ENCODE measurements at regions of chr6 and their contacts with region 1.

Region 1: GRCh38 chr6:157756708-157757429 is 66.2 kb upstream of the SNX9 start:
- DNase-seq: peak; percentile 82 to 93
- H3K4me3 ChIP-seq: no peak overlapping the region
- H3K27ac ChIP-seq: no peak overlapping the region
- H3K4me1 ChIP-seq: peaks cover 0 to 7% (median 5%) of the 10 kb centered on the region in 4 experiments; a peak in 4 of 7 replicates
- H3K27me3 ChIP-seq: no peaks in the 10 kb centered on the region
- CTCF ChIP-seq: peak; percentile 83 to 99 (median 91)
- EP300 ChIP-seq: no peak
- POLR2A ChIP-seq: no peak
- RAD21 ChIP-seq: peak; percentile 89

Region 2: DNA sequence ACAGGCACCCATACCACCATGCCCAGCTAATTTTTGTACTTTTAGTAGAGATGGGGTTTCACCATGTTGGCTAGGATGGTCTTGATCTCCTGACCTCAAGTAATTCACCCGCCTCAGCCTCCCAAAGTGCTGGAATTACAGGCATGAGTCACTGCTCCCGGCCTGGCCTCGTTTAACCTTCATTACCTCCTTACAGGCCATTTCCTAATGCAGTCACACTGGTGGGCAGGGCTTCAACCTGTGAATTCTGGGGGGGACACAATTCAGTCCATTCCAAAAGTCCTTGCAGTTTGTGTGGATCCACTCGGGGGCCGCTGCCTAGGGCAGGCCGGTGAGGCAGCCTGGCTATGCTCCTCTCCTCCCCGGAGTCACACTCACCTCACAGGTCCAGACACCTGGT is 46.3 kb before region 1 on chr6:
- CTCF ChIA-PET with region 1: interaction called, 15 read pairs
- POLR2A ChIA-PET with region 1: no interaction called
- DNase-seq: no peak
- H3K4me3 ChIP-seq: no peak overlapping the region
- H3K27ac ChIP-seq: no peak overlapping the region
- H3K4me1 ChIP-seq: peaks cover 5 to 17% (median 11%) of the 10 kb centered on the region in 4 experiments; a peak in 5 of 7 replicates
- H3K27me3 ChIP-seq: peaks cover 0 to 2% (median 0%) of the 10 kb centered on the region in 4 experiments; a peak in 1 of 7 replicates
- CTCF ChIP-seq: no peak
- EP300 ChIP-seq: no peak
- POLR2A ChIP-seq: no peak
- RAD21 ChIP-seq: no peak

Region 3: DNA sequence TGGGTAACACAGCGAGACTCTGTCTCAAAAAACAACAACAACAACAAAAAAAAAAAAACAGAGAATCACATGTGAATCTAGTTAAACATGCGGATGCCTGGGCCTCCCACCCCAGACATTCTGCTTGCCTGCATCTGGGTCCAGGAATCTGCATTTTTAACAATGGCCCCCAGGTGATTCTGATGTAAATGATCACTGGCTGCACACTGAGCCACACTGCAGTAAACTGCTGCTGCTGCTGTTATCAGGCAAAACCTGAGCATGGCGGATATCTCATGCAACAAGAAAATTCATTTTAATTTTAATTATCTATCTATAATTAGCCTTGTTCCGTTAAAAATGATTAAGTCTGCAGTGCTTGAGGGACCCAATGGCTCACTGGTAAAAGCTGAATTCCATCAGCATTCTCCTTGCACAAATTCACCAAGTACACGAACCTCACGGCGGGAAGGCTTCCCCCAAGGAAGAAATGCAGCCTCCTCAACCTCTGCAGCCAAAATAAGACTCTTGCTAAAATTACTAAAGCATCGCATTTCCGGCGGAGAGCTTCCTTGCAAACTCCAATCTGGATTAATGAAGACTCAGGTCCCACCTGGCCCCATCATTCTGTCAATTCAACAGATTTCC is 15.4 kb before region 1 on chr6:
- CTCF ChIA-PET with region 1: interaction called, 11 read pairs
- POLR2A ChIA-PET with region 1: no interaction called
- DNase-seq: no peak
- H3K4me3 ChIP-seq: no peak overlapping the region
- H3K27ac ChIP-seq: no peak overlapping the region
- H3K4me1 ChIP-seq: peaks cover 7 to 11% (median 9%) of the 10 kb centered on the region in 4 experiments; a peak in 6 of 7 replicates
- H3K27me3 ChIP-seq: no peaks in the 10 kb centered on the region
- CTCF ChIP-seq: no peak
- EP300 ChIP-seq: no peak
- POLR2A ChIP-seq: no peak
- RAD21 ChIP-seq: no peak

Region 4: GRCh38 chr6:157873735-157874344 is 117.0 kb after region 1 on chr6:
- CTCF ChIA-PET with region 1: interaction called, 54 read pairs
- POLR2A ChIA-PET with region 1: interaction called, 3 read pairs
- DNase-seq: peak; percentile 70 to 97
- H3K4me3 ChIP-seq: no peak overlapping the region
- H3K27ac ChIP-seq: no peak overlapping the region
- H3K4me1 ChIP-seq: peaks cover 0 to 7% (median 2%) of the 10 kb centered on the region in 4 experiments; a peak in 4 of 7 replicates
- H3K27me3 ChIP-seq: no peaks in the 10 kb centered on the region
- CTCF ChIP-seq: peak; percentile 83 to 93 (median 85)
- EP300 ChIP-seq: no peak
- POLR2A ChIP-seq: no peak
- RAD21 ChIP-seq: peak; percentile 85 to 93

Region 5: DNA sequence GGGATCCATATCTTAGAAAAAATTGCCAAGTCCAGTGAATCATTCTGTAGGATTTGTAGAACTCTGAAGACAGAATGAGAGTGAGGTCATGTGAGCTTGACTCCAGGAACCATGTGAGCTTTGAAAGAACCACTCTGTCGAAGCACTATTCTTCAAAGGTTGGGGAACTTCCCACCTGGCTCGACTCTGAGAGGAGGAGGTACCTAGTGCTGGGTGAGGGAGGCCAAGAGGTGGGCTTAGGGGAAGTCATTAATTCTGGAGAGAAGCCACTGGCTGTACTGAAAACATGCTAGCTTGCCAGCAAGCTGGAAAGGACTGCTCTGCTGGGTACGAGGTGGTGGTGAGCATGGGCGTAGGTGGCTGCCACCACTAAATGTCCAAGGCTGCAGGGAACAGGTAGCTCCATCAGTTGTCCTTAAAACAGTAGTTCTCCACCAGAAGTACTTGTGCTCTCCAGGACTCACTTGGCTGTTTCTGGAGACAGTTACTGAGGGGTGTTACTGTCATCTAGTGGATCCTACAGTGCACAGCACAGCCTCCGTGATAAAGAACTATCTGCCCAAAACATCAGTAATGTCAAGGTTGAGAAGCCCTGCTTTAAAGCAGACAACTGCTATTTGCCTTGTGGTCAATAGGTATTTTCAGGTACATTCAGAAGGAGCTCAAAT is 190.1 kb after region 1 on chr6:
- CTCF ChIA-PET with region 1: interaction called, 17 read pairs
- POLR2A ChIA-PET with region 1: no interaction called
- DNase-seq: no peak
- H3K4me3 ChIP-seq: no peak overlapping the region
- H3K27ac ChIP-seq: no peak overlapping the region
- H3K4me1 ChIP-seq: no peaks in the 10 kb centered on the region
- H3K27me3 ChIP-seq: no peaks in the 10 kb centered on the region
- CTCF ChIP-seq: peak in 2 of 3 experiments; percentile 65 to 82; a peak in 3 of 4 replicates
- EP300 ChIP-seq: no peak
- POLR2A ChIP-seq: peak in 1 of 2 experiments; percentile 20; a peak in 1 of 3 replicates
- RAD21 ChIP-seq: peak; percentile 91 to 93